ENCODE measurements at regions of chrX and their contacts with region 1.

Region 1: DNA sequence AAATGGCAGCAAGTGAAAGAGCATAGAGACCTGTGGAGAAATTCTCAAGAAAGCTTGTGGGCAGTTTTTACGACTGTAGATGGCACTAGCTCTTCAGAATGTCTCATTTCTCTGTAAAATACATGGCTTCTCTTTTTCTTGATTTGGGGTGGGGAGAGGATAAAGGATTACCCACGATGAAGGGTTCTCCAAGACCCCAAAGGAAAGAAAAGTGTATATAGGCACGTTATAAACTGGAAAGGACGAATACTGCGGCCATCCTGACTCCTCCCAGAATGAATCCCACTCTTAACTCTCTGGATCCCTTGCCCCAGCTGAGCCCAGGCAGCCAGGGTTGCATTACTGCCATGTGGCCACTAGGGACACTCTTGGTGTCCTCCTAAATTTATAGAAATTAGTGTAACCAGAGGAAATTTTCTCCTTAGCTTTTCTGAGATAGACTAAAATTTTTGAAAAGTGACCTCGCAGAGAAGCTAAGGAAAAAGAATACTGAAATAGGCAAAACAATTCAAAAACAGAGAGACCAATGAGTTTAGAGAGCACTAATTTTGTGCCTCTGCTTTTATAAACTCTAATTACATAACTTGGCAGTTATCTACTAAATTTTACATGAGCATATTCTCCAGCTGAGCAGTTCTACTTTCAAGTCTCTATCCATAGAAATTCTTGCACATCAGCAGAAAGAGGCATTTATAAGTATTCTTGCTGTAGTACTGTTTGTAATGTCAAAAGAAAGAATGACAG is 37.8 kb upstream of the PCDH19 start:
- DNase-seq: peak; percentile 33 to 63
- ATAC-seq: peak; percentile 82 to 90
- H3K4me3 ChIP-seq: no peak overlapping the region
- H3K27ac ChIP-seq: no peak overlapping the region
- H3K4me1 ChIP-seq: no peaks in the 10 kb centered on the region
- CTCF ChIP-seq: peak; percentile 46
- EP300 ChIP-seq: no peak
- POLR2A ChIP-seq: no peak
- RAD21 ChIP-seq: no peak

Region 2: GRCh38 chrX:100376576-100376975 is 71.2 kb before region 1 on chrX:
- CTCF ChIA-PET with region 1: no interaction called
- POLR2A ChIA-PET with region 1: no interaction called
- DNase-seq: no peak
- ATAC-seq: no peak
- H3K4me3 ChIP-seq: no peak overlapping the region
- H3K27ac ChIP-seq: no peak overlapping the region
- H3K4me1 ChIP-seq: no peaks in the 10 kb centered on the region
- CTCF ChIP-seq: no peak
- EP300 ChIP-seq: no peak
- POLR2A ChIP-seq: no peak
- RAD21 ChIP-seq: no peak

Region 3: DNA sequence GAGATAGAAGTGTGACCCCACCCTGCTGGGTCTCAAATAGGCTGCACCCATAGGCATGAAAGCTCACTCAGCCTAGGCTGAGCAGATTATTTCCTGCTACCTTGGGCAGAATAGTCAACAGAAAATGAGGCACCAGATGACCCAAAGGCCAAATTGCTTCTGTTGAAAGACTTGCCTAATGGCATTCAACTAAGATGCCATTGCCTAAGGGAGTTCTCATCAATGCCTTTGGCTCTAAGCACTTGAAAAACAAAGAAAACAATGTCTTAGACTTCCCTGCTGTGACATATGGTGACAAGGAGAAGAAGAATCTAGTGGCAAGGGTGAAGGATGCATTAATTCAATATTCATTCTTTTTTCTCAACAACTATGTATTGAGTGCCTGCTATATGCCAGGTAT is 12.1 kb before region 1 on chrX:
- CTCF ChIA-PET with region 1: interaction called, 10 read pairs
- POLR2A ChIA-PET with region 1: no interaction called
- DNase-seq: no peak
- ATAC-seq: no peak
- H3K4me3 ChIP-seq: no peak overlapping the region
- H3K27ac ChIP-seq: no peak overlapping the region
- H3K4me1 ChIP-seq: no peaks in the 10 kb centered on the region
- CTCF ChIP-seq: no peak
- EP300 ChIP-seq: no peak
- POLR2A ChIP-seq: no peak
- RAD21 ChIP-seq: no peak

Measured in A549 (cell line).